ENCODE measurements at regions of chr3 and their contacts with region 1.

Region 1: DNA sequence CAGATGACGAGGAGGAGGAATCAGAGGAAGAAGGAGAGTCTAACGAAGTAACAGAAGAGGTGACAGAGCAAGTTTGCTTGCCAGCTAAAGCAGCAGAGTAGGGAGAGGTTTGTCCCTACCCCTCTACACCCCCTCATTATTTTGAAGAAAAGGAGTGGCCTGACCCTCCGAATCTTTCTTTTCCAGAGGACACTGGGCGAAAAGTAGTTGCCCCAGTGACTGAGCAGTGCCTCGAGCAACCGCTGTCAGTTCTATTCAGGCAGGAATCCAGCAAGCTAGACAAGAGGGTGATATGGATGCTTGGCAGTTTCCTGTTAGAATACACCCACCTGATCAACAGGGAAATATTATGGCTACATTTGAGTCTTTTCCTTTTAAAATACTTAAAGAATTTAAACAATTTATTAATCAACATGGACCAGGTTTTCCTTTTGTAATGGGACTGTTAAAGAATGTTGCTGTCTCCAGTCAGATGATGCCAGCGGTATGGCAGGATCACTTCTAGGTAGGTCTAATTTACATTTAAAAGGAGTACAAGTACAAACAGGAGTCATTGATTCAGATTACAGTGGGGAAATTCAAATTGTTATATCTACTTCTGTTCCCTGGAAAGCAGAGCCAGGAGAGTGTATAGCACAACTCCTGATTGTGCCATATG is 31.9 kb upstream of the ACVR2B start:
- DNase-seq: no peak
- ATAC-seq: no peak

Region 2: GRCh38 chr3:37768107-37768809 is 653.5 kb before region 1 on chr3:
- intact Hi-C with region 1: no loop called
- DNase-seq: no peak
- ATAC-seq: no peak

Region 3: DNA sequence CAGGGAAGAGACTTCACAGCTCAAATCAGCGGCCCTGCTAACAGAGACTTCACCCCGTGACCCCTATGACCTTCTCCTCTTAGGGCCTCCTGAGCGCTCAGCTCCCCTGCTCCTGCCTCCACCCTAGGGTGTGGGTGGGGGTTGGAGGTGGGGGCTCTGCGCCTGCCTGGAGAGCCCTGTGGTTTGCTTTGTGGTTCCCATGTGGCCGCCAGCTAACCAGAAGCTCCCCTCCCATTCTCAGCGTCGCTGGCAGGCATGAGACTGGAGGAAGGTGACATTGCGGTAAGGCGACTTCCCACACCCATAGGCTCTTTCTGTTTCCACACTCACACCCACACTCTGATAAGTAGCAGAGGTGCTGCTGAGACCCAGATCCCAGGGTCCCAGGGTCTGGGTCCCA is 47.6 kb before region 1 on chr3:
- intact Hi-C with region 1: loop called in 1 of 2 experiments (anchors 10 kb)
- DNase-seq: no peak
- ATAC-seq: no peak